H1 (cell line): ENCODE measurements at regions of chr2 and their contacts with region 1.

Region 1: DNA sequence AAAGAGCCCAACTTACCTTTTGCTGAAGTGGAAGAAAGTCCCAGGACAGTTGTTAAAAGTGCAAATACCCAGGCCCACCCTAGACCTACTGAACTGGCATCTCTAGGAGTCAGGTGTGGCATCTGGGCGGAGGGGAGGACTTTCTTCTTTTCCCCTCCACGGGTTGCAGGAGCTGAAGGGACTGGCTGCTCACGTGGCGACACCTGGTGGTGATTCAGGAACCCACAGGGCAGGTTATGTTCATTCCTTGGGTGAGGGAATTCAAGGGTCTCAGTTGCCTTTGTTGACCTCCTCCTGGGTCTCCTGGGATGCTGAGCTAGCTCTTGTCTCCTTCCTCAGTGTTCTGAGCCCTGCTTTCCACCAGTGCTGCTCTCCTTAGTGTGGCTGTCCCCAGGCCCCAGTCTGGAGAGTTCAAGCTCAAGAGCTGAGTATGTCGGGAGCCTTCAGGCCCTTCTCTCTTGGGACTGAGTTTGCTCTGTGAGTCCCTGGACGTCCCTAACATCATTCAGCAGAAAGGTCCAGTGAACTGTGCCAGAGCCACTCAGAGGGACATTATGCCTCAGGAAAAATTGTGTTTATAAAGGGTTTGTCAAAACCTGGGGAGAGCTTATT is 56.9 kb downstream of the DYSF start:
- DNase-seq: peak in 1 of 2 experiments; percentile 92
- H3K4me3 ChIP-seq: no peak overlapping the region
- H3K27ac ChIP-seq: no peak overlapping the region
- H3K4me1 ChIP-seq: no peaks in the 10 kb centered on the region; a peak in 1 of 7 replicates
- H3K27me3 ChIP-seq: no peaks in the 10 kb centered on the region
- CTCF ChIP-seq: peak; percentile 90 to 97 (median 95)
- EP300 ChIP-seq: no peak
- POLR2A ChIP-seq: no peak
- RAD21 ChIP-seq: peak; percentile 97 to 98

Region 2: DNA sequence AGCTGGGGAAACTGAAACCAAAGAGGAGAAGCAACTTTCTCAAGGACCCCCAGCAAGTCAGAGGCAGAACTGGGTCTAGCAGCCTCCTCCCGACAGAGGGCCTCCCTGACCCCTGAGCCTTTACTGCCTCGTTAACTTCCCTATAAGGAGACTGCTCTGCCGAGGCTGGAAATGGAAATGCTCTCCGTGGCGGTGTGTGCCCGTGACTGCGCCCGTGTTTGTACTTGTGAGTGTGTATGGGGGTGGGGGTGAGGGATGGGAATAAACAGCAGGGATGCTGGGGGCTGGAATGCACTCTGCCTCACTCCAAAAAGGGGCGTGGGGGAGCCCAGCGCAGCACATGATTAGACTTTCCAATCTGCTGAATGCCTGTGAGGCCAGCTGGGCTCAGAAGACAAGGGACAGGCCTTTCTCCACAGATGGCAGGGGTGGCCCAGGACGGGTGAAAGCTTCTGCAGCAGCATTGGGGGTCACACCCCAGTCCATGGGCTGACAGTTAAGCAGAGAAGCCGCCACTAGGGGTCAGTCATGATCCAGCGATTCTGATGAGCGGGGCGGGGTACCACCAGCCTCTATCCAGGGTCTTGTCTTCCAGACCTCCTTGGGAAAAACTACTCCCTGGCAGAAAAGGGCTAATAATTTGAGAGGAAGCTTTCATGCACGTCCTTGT is 353.0 kb before region 1 on chr2:
- CTCF ChIA-PET with region 1: interaction called, 13 read pairs
- POLR2A ChIA-PET with region 1: no interaction called
- DNase-seq: peak; percentile 43 to 96
- H3K4me3 ChIP-seq: no peak overlapping the region
- H3K27ac ChIP-seq: no peak overlapping the region
- H3K4me1 ChIP-seq: peaks cover 0 to 2% (median 0%) of the 10 kb centered on the region in 4 experiments; a peak in 3 of 7 replicates
- H3K27me3 ChIP-seq: no peaks in the 10 kb centered on the region; a peak in 1 of 7 replicates
- CTCF ChIP-seq: peak; percentile 80 to 90 (median 88)
- EP300 ChIP-seq: no peak
- POLR2A ChIP-seq: no peak
- RAD21 ChIP-seq: peak; percentile 94 to 95

Region 3: GRCh38 chr2:71452565-71452964 is 57.7 kb before region 1 on chr2:
- CTCF ChIA-PET with region 1: interaction called, 211 read pairs
- POLR2A ChIA-PET with region 1: interaction called, 3 read pairs
- DNase-seq: no peak
- H3K4me3 ChIP-seq: peak overlapping the region in 1 of 4 experiments; percentile 62; a peak in 2 of 8 replicates
- H3K27ac ChIP-seq: no peak overlapping the region
- H3K4me1 ChIP-seq: peaks cover 24 to 33% (median 27%) of the 10 kb centered on the region in 4 experiments
- H3K27me3 ChIP-seq: peaks cover 0 to 23% (median 17%) of the 10 kb centered on the region in 4 experiments; a peak in 6 of 7 replicates
- CTCF ChIP-seq: peak; percentile 48 to 49 (median 48)
- EP300 ChIP-seq: no peak
- POLR2A ChIP-seq: no peak
- RAD21 ChIP-seq: peak; percentile 27 to 42; a peak in 2 of 4 replicates

Region 4: GRCh38 chr2:71466303-71467173 is 43.8 kb before region 1 on chr2:
- CTCF ChIA-PET with region 1: interaction called, 238 read pairs
- POLR2A ChIA-PET with region 1: interaction called, 3 read pairs
- DNase-seq: peak in 1 of 2 experiments; percentile 72
- H3K4me3 ChIP-seq: peak overlapping the region; percentile 35 to 62 (median 56)
- H3K27ac ChIP-seq: no peak overlapping the region
- H3K4me1 ChIP-seq: peaks cover 0 to 12% (median 4%) of the 10 kb centered on the region in 4 experiments; a peak in 4 of 7 replicates
- H3K27me3 ChIP-seq: peaks cover 41 to 78% (median 78%) of the 10 kb centered on the region in 4 experiments
- CTCF ChIP-seq: no peak
- EP300 ChIP-seq: no peak
- POLR2A ChIP-seq: no peak
- RAD21 ChIP-seq: no peak

Region 5: GRCh38 chr2:71477231-71477691 is 33.0 kb before region 1 on chr2:
- CTCF ChIA-PET with region 1: interaction called, 10 read pairs
- POLR2A ChIA-PET with region 1: no interaction called
- DNase-seq: no peak
- H3K4me3 ChIP-seq: no peak overlapping the region
- H3K27ac ChIP-seq: no peak overlapping the region
- H3K4me1 ChIP-seq: peaks cover 2 to 5% (median 4%) of the 10 kb centered on the region in 4 experiments; a peak in 5 of 7 replicates
- H3K27me3 ChIP-seq: no peaks in the 10 kb centered on the region; a peak in 1 of 7 replicates
- CTCF ChIP-seq: no peak
- EP300 ChIP-seq: no peak
- POLR2A ChIP-seq: no peak
- RAD21 ChIP-seq: no peak

Region 6: DNA sequence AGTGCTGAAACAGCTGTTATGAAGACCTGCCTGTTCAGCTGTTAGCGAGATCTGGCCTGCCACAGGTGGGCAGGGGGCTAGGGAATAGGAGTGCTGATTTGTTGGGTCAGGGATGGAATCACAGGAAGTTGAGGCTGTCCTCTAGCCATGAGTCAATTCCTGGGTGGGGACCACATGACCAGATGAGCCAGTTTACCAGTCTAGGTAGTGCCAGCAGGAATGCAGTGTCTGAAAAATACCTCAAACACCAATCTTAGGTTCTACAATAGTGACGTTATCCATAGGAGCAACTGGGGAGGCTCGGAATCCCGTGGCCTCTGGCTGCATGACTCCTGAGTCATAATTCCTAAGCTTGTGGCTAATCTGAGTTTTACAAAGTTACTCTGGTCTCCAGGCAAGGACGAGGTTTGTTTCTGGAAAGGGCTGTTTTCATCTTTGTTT is 12.0 kb before region 1 on chr2:
- CTCF ChIA-PET with region 1: interaction called, 16 read pairs
- POLR2A ChIA-PET with region 1: no interaction called
- DNase-seq: no peak
- H3K4me3 ChIP-seq: no peak overlapping the region
- H3K27ac ChIP-seq: no peak overlapping the region
- H3K4me1 ChIP-seq: peaks cover 4 to 9% (median 6%) of the 10 kb centered on the region in 4 experiments; a peak in 6 of 7 replicates
- H3K27me3 ChIP-seq: no peaks in the 10 kb centered on the region
- CTCF ChIP-seq: no peak
- EP300 ChIP-seq: no peak
- POLR2A ChIP-seq: no peak
- RAD21 ChIP-seq: no peak

Region 7: DNA sequence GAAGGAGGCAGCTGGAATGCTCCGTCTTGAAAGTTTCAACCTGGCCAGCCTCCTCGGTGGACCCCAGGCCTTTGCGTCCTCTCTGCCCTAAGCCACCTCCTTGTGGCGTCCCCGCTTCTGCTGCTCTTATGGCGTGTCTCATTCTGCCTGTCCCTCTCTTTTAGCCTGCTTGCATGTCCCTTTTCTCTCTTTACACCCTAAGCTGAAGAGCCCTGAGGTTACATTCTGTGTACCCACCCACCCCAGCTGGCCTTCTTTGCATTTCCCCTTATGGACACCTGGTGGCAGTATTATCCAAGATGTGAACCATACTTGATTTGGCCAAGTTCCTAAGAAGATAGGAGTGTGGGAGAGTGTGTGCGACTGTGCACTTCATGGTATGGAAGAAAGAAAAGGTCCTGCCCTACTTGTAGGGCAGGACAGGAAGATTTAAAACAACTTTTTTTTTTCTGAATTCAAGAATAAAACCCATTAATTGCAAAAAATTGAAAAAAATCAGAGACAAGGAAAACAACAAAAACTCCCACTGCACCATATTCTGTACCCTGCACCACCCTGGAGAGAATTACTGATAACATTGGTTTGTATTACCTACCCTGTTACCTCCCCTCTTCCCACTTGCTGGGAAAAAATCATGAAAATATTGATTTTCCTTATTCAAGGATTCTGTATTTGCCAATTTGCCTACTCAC is 20.5 kb after region 1 on chr2:
- CTCF ChIA-PET with region 1: interaction called, 12 read pairs
- POLR2A ChIA-PET with region 1: no interaction called
- DNase-seq: peak; percentile 33 to 75
- H3K4me3 ChIP-seq: no peak overlapping the region
- H3K27ac ChIP-seq: no peak overlapping the region
- H3K4me1 ChIP-seq: peaks cover 0 to 11% (median 4%) of the 10 kb centered on the region in 4 experiments; a peak in 6 of 7 replicates
- H3K27me3 ChIP-seq: no peaks in the 10 kb centered on the region
- CTCF ChIP-seq: peak; percentile 54 to 87 (median 73)
- EP300 ChIP-seq: no peak
- POLR2A ChIP-seq: no peak
- RAD21 ChIP-seq: peak; percentile 81 to 91

Region 8: DNA sequence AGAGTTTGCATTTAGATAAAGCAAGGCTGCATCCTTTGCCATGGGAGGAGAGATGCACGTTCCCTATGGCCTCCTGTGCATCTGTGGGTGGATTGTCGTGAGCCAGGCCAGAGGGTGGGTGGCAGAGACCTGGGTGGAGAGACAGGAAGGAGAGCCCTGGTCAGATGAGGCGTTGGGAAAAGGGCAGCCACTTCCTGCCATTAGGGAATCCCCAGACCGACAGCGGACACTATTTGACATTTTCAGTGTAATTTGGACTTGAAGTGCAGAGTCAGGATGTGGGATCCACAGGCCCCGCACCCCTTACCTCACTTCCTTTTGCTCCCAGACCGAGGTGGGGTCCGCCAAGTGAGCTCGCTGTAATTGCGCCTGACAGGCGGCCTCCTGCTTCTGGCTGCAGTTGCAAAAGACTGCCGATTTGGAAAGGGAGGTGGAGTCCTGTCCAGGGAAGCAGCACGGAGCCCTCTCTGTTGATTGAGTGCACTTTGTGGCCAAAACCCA is 93.1 kb after region 1 on chr2:
- CTCF ChIA-PET with region 1: no interaction called
- POLR2A ChIA-PET with region 1: no interaction called
- DNase-seq: no peak
- H3K4me3 ChIP-seq: no peak overlapping the region
- H3K27ac ChIP-seq: no peak overlapping the region
- H3K4me1 ChIP-seq: peaks cover 0 to 12% (median 5%) of the 10 kb centered on the region in 4 experiments; a peak in 3 of 7 replicates
- H3K27me3 ChIP-seq: no peaks in the 10 kb centered on the region
- CTCF ChIP-seq: no peak
- EP300 ChIP-seq: no peak
- POLR2A ChIP-seq: no peak
- RAD21 ChIP-seq: no peak

Region 9: GRCh38 chr2:71671895-71672825 is 161.9 kb after region 1 on chr2:
- CTCF ChIA-PET with region 1: no interaction called
- POLR2A ChIA-PET with region 1: no interaction called
- DNase-seq: peak in 1 of 2 experiments; percentile 60
- H3K4me3 ChIP-seq: no peak overlapping the region
- H3K27ac ChIP-seq: no peak overlapping the region
- H3K4me1 ChIP-seq: no peaks in the 10 kb centered on the region; a peak in 1 of 7 replicates
- H3K27me3 ChIP-seq: no peaks in the 10 kb centered on the region
- CTCF ChIP-seq: peak; percentile 60 to 72 (median 71)
- EP300 ChIP-seq: no peak
- POLR2A ChIP-seq: no peak
- RAD21 ChIP-seq: peak; percentile 76 to 83

Region 10: DNA sequence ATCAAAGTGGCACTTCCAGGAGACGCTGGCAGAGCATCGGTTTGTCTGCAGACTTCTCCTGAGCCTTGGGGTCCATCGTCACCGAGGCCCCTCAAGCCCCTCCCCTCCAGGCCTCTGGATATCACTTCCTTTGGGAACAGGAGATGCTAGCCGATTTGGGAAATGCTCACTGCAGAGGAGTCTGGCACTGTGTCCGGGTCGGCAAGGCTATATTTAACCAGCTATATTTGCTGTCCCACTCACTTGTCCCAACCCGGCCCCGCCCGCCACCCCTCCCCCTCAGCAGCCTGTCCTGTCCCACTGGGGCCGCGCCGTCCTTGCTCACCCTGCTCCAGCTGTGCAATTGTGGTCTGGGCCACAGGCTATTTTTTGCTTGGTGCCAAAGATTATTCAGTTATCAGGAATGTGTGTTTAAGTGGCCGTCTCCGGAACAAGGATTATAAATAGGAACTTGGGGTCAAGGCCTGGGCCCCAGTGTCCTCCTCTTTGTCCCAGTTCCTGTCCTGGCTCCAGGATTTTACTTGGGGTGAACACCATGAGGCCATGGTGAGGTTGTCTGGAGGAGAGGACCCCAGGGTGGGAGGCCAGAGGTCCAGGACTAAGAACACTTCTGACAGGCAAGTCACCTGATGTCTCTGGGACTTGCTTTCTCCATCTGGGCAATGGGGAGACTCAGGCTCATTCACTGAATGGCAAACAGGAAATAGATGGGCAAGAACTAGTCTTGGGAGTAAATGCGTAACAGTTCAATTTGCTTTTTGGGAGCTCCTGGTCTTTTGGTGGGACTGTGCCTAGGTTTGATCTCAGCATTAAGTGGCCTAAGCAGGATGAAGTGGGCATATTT is 206.7 kb after region 1 on chr2:
- CTCF ChIA-PET with region 1: no interaction called
- POLR2A ChIA-PET with region 1: no interaction called
- DNase-seq: no peak
- H3K4me3 ChIP-seq: no peak overlapping the region
- H3K27ac ChIP-seq: no peak overlapping the region
- H3K4me1 ChIP-seq: no peaks in the 10 kb centered on the region
- H3K27me3 ChIP-seq: no peaks in the 10 kb centered on the region
- CTCF ChIP-seq: no peak
- EP300 ChIP-seq: no peak
- POLR2A ChIP-seq: no peak
- RAD21 ChIP-seq: no peak